ENCODE measurements at regions of chr19 and their contacts with region 1.

Region 1: GRCh38 chr19:48203732-48204628 is 33.5 kb downstream of the ZSWIM9 start:
- DNase-seq: peak; percentile 91
- ATAC-seq: peak; percentile 100
- H3K4me3 ChIP-seq: peak overlapping the region; percentile 87
- H3K27ac ChIP-seq: peak overlapping the region; percentile 71
- H3K4me1 ChIP-seq: peaks cover 3% of the 10 kb centered on the region; the same call in 1 of the 2 replicates
- H3K27me3 ChIP-seq: no peaks in the 10 kb centered on the region
- CTCF ChIP-seq: no peak
- EP300 ChIP-seq: no peak
- POLR2A ChIP-seq: peak; percentile 92
- RAD21 ChIP-seq: no peak

Region 2: DNA sequence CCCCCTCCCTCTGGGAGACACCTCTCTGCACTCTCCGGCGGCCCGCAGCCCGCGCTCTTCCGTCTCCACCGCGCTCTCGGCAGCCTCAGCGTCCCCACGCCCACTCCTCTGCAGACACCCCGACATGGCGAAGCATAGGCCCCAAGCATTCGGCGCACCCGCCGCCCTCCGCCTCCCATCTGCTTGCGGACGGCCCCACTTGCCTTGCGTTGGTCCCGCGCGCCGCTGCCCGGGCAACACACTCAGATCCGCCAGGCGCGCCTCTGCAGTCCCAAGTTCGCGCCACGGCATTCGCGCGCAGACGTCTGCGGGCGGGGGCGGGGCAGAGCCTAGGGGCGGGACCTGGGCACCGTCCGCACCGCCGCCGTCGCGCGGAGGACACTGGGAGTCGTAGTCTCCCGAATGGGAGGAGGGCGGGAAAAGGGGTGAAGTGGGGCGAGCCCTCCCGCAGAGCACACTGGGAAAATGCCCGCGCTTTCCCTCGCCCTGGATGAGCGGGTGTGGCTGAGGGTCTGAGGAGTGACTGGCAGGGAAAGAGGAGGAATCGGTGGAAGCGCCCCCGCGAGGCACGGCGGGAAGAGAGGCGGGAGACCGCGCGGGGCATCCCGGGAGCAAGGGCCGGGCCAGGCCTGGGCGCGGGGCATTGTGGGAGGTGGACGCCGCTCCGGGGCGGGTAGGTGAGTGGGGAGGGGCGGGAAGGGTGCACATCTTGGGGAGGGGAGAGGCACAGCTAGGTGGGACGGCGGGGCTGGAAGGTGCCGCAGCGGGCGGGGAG is 33.8 kb before region 1 on chr19 and contains the starts of genes LIG1 and ZSWIM9:
- CTCF ChIA-PET with region 1: interaction called, 11 read pairs
- POLR2A ChIA-PET with region 1: interaction called, 8 read pairs
- RAD21 ChIA-PET with region 1: interaction called, 6 read pairs
- SMC1A ChIA-PET with region 1: interaction called, 3 read pairs
- in situ Hi-C with region 1: no loop called
- intact Hi-C with region 1: no loop called
- DNase-seq: peak; percentile 71
- ATAC-seq: peak; percentile 97
- H3K4me3 ChIP-seq: peak within 1 kb of the TSS; percentile 99
- H3K27ac ChIP-seq: peak within 1 kb of the TSS; percentile 99
- H3K4me1 ChIP-seq: peaks cover 19% of the 10 kb centered on the region
- H3K27me3 ChIP-seq: no peaks in the 10 kb centered on the region
- CTCF ChIP-seq: no peak
- EP300 ChIP-seq: 0 out of 4 replicates have a peak, but pooled peaks of 1 of the 2 experiments have one; percentile 28
- POLR2A ChIP-seq: peak; percentile 88
- RAD21 ChIP-seq: no peak
- polyA plus RNA-seq, gene LIG1: 7.8 to 31.6 TPM
- polyA plus RNA-seq, gene ZSWIM9: 0.29 TPM in 1 of 2 experiments, not detected in the other

Region 3: DNA sequence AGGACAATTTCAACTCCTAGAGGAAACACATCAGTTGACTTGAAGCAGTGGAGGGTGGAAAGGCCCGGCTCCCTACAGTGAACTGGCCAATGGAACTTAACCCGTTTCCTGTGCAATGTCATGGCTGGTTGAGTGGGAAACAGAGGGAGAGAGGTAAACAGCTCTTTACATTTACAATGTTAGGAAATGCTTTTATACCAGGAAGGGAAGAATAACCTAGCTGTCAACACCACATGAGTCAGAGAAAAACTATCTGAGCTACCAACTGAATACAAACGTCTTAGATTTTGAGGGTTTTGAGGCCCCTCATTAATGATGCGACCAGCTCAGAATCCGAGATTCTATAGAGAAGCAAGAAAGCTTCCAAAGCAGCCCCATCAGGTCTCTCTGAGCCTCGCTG is 15.0 kb after region 1 on chr19:
- CTCF ChIA-PET with region 1: interaction called, 5 read pairs
- POLR2A ChIA-PET with region 1: interaction called, 8 read pairs
- RAD21 ChIA-PET with region 1: no interaction called
- SMC1A ChIA-PET with region 1: interaction called, 15 read pairs
- in situ Hi-C with region 1: no loop called
- intact Hi-C with region 1: no loop called
- DNase-seq: no peak
- ATAC-seq: no peak
- H3K4me3 ChIP-seq: no peak overlapping the region
- H3K27ac ChIP-seq: no peak overlapping the region
- H3K4me1 ChIP-seq: no peaks in the 10 kb centered on the region
- H3K27me3 ChIP-seq: no peaks in the 10 kb centered on the region
- CTCF ChIP-seq: no peak
- EP300 ChIP-seq: no peak
- POLR2A ChIP-seq: no peak
- RAD21 ChIP-seq: no peak

Region 4: DNA sequence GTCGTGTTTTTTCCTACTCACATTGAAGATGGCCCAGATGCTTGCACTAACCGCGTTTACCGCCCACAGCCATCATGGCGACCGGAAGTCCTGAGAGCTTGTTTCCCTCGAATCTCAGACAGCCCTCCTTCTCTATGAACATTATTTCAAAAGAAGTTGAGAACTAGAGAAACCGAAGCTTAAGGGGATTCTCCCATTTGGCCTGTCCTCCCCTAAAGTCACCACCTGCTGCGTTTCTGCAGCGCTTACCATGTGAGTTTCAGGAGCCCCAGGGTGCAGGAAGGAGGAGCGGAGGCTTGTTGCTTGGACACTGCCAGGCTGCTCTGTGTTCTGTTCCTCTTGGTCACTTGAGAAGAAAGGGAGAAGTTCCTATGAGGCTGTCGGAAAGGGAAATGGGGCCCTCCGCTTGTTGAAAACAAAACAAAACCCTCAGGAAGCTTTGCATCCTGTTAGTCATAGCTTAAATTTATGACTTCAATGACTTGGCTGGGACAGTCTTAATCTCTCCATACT is 45.6 kb after region 1 on chr19:
- CTCF ChIA-PET with region 1: interaction called, 13 read pairs
- POLR2A ChIA-PET with region 1: interaction called, 17 read pairs
- RAD21 ChIA-PET with region 1: interaction called, 12 read pairs
- SMC1A ChIA-PET with region 1: interaction called, 12 read pairs
- in situ Hi-C with region 1: no loop called
- intact Hi-C with region 1: loop called (anchors 5 kb)
- DNase-seq: peak; percentile 78
- ATAC-seq: peak; percentile 95
- H3K4me3 ChIP-seq: peak overlapping the region; percentile 77
- H3K27ac ChIP-seq: peak overlapping the region; percentile 97
- H3K4me1 ChIP-seq: peaks cover 25% of the 10 kb centered on the region
- H3K27me3 ChIP-seq: no peaks in the 10 kb centered on the region
- CTCF ChIP-seq: no peak
- EP300 ChIP-seq: no peak
- POLR2A ChIP-seq: peak; percentile 86
- RAD21 ChIP-seq: no peak